ENCODE measurements at regions of chr2 and their contacts with region 1.

Region 1: GRCh38 chr2:34096562-34097171 is 497.6 kb upstream of the FAM98A start:
- DNase-seq: peak in 4 of 5 donors; percentile 27 to 34 (median 28)
- H3K4me3 ChIP-seq: no peak overlapping the region
- H3K4me3 Mint-ChIP-seq: no peak overlapping the region
- H3K27ac ChIP-seq: no peak overlapping the region
- H3K27ac Mint-ChIP-seq: no peak overlapping the region
- H3K4me1 ChIP-seq: no peaks in the 10 kb centered on the region
- H3K4me1 Mint-ChIP-seq: peaks cover 0 to 2% (median 0%) of the 10 kb centered on the region in 4 donors
- H3K27me3 ChIP-seq: no peaks in the 10 kb centered on the region
- H3K27me3 Mint-ChIP-seq: peaks cover 0 to 1% of the 10 kb centered on the region in 2 donors

Region 2: DNA sequence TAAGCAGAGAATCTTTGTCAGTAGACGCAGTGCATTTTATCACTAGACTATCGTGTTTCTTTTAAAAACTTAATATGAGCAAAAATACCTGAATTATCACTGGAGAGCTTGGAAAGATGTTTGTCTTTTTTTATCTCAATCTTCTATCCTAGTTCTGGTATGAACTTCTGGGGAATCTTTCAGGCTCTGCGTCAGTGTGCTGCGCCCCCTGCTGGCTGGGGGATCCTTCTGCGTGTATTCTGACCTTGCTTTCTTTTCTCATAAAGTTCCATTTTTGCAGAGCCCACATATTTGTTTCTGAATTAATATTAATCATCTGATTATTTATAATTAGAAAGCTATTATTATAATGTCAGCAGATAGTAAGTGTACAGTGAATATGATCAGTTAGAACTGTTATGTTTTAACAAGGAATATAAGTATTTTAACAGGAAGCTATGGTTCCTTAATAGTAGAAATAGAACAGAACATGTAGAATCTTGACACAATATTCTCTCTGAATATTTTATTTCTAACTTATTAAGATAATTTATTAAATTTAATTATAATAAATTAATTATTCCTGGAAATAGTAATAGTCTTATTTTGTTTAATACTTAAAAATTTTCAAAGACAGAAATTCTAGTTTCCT is 1313.9 kb after region 1 on chr2:
- CTCF ChIA-PET with region 1: no interaction called
- POLR2A ChIA-PET with region 1: no interaction called
- intact Hi-C with region 1: loop called (anchors 2 kb)
- DNase-seq: peak in 4 of 5 donors; percentile 7 to 22 (median 14)
- H3K4me3 ChIP-seq: no peak overlapping the region
- H3K4me3 Mint-ChIP-seq: no peak overlapping the region
- H3K27ac ChIP-seq: no peak overlapping the region
- H3K27ac Mint-ChIP-seq: no peak overlapping the region
- H3K4me1 ChIP-seq: no peaks in the 10 kb centered on the region
- H3K4me1 Mint-ChIP-seq: no peaks in the 10 kb centered on the region
- H3K27me3 ChIP-seq: no peaks in the 10 kb centered on the region
- H3K27me3 Mint-ChIP-seq: peaks cover 2% of the 10 kb centered on the region in 2 donors